CD4-positive, alpha-beta memory T cell (primary cell): ENCODE measurements at regions of chr17 and their contacts with region 1.

Region 1: GRCh38 chr17:47895856-47896671 is at the start of gene SP2:
- DNase-seq: peak; percentile 100
- H3K4me3 ChIP-seq: peak within 1 kb of the TSS; percentile 92 to 96
- H3K4me3 Mint-ChIP-seq: peak within 1 kb of the TSS; percentile 94 to 100 (median 99)
- H3K27ac ChIP-seq: peak within 1 kb of the TSS; percentile 97
- H3K27ac Mint-ChIP-seq: peak within 1 kb of the TSS; percentile 96 to 100 (median 100)
- H3K4me1 ChIP-seq: peaks cover 42% of the 10 kb centered on the region
- H3K4me1 Mint-ChIP-seq: peaks cover 27 to 58% (median 39%) of the 10 kb centered on the region in 4 donors
- H3K27me3 ChIP-seq: no peaks in the 10 kb centered on the region
- H3K27me3 Mint-ChIP-seq: no peaks in the 10 kb centered on the region
- total RNA-seq, gene SP2: 39.6 to 39.9 TPM

Region 2: DNA sequence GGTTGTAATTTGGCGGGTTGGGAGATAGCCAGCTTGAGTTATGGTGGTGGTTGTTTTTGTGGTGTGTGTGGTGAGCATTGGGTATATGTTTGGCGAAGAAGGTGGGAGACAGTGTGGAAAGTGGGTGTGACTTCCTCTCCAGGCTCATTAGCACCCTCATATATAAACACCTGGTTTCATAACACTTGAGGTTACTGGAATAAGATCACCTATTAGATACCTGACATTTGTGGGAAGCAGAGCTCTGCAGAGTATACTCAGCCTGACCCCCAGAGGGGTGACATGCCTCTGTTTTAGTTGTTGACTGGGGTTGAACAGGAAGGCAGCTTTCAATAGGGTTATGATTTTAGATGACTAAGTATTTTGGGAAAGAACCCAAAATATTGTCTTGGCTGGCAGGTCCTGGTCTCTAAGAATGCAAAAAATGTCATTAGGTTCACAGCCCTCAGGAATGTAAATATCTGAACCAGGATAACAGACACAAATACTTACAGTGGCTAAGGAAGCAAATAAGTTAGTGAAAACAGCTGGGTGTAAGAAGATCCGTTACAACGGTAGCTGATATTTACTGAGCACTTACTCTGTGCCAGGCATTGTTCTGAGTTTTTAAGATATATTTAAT is 590.7 kb before region 1 on chr17:
- CTCF ChIA-PET with region 1: no interaction called
- POLR2A ChIA-PET with region 1: no interaction called
- intact Hi-C with region 1: no loop called
- DNase-seq: no peak
- H3K4me3 ChIP-seq: no peak overlapping the region
- H3K4me3 Mint-ChIP-seq: peak overlapping the region in 1 of 8 donors; percentile 13
- H3K27ac ChIP-seq: no peak overlapping the region
- H3K27ac Mint-ChIP-seq: peak overlapping the region in 4 of 7 donors; percentile 3 to 48 (median 22)
- H3K4me1 ChIP-seq: peaks cover 14% of the 10 kb centered on the region
- H3K4me1 Mint-ChIP-seq: peaks cover 8 to 14% (median 10%) of the 10 kb centered on the region in 4 donors
- H3K27me3 ChIP-seq: no peaks in the 10 kb centered on the region
- H3K27me3 Mint-ChIP-seq: peaks cover 0 to 2% of the 10 kb centered on the region in 2 donors

Region 3: GRCh38 chr17:47643116-47643515 is 252.9 kb before region 1 on chr17:
- CTCF ChIA-PET with region 1: no interaction called
- POLR2A ChIA-PET with region 1: no interaction called
- intact Hi-C with region 1: no loop called
- DNase-seq: no peak
- H3K4me3 ChIP-seq: no peak overlapping the region
- H3K4me3 Mint-ChIP-seq: no peak overlapping the region
- H3K27ac ChIP-seq: no peak overlapping the region
- H3K27ac Mint-ChIP-seq: no peak overlapping the region
- H3K4me1 ChIP-seq: peaks cover 8% of the 10 kb centered on the region
- H3K4me1 Mint-ChIP-seq: peaks cover under 1 to 13% (median 6%) of the 10 kb centered on the region in 4 donors
- H3K27me3 ChIP-seq: no peaks in the 10 kb centered on the region
- H3K27me3 Mint-ChIP-seq: no peaks in the 10 kb centered on the region

Region 4: GRCh38 chr17:47804516-47804915 is 91.5 kb before region 1 on chr17:
- CTCF ChIA-PET with region 1: no interaction called
- POLR2A ChIA-PET with region 1: no interaction called
- intact Hi-C with region 1: no loop called
- DNase-seq: no peak
- H3K4me3 ChIP-seq: no peak overlapping the region
- H3K4me3 Mint-ChIP-seq: no peak overlapping the region
- H3K27ac ChIP-seq: no peak overlapping the region
- H3K27ac Mint-ChIP-seq: peak overlapping the region in 1 of 7 donors; percentile 70
- H3K4me1 ChIP-seq: no peaks in the 10 kb centered on the region
- H3K4me1 Mint-ChIP-seq: no peaks in the 10 kb centered on the region
- H3K27me3 ChIP-seq: no peaks in the 10 kb centered on the region
- H3K27me3 Mint-ChIP-seq: no peaks in the 10 kb centered on the region

Region 5: GRCh38 chr17:47821424-47822391 is 74.4 kb before region 1 on chr17 and contains the start of gene OSBPL7:
- CTCF ChIA-PET with region 1: interaction called, 3 read pairs
- POLR2A ChIA-PET with region 1: interaction called, 26 read pairs
- intact Hi-C with region 1: no loop called
- DNase-seq: peak; percentile 72 to 88 (median 76)
- H3K4me3 ChIP-seq: peak within 1 kb of the TSS; percentile 90 to 93
- H3K4me3 Mint-ChIP-seq: peak within 1 kb of the TSS; percentile 94 to 99 (median 97)
- H3K27ac ChIP-seq: peak within 1 kb of the TSS; percentile 69
- H3K27ac Mint-ChIP-seq: peak within 1 kb of the TSS; percentile 86 to 98 (median 96)
- H3K4me1 ChIP-seq: peaks cover 25% of the 10 kb centered on the region
- H3K4me1 Mint-ChIP-seq: peaks cover 12 to 26% (median 21%) of the 10 kb centered on the region in 4 donors
- H3K27me3 ChIP-seq: no peaks in the 10 kb centered on the region
- H3K27me3 Mint-ChIP-seq: no peaks in the 10 kb centered on the region
- total RNA-seq, gene OSBPL7: 46.5 to 50.4 TPM

Region 6: DNA sequence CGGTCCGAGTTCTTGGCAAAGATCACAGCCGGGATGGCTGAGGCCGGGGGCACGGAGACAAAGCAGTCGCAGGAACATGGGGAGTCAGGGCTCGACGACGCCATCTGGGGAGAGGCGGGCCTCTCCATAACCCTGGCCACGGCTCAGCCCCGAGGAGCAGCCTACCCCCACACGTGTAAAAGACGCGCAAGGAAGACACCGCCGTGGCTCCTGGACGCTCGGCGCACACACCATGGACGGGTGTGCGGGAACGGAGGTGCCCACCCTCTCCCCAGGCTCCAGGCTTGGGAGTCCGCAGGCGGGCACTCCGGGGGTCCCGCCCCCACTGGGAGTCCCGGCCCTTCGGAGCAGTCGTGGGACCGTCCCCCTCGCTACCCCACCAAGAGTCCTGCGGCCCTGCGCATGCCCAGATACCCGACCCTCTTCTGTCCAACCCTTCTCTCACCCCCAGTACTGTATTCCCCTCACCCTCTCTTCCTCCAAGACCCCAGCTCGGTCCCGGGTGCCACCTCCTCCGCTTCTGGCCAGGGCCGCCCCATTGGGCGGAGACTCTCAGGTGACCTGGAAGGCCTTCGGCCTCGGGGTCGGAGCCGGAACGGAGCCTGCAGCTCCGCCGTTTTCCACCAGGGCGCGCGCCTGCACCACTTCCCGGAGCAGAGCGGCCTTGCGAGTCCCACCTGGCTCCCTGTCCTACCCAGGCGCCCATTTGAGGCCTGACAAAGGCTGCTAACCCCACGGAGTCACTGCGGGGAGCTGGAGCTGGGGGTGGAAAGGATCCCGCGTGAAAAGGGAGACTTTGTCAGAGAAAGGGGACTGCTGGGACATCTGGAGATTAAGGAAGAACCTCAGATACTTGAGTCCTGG is 55.1 kb before region 1 on chr17 and contains the start of gene SCRN2:
- CTCF ChIA-PET with region 1: interaction called, 562 read pairs
- POLR2A ChIA-PET with region 1: interaction called, 271 read pairs
- intact Hi-C with region 1: no loop called
- DNase-seq: peak; percentile 78 to 88 (median 79)
- H3K4me3 ChIP-seq: peak within 1 kb of the TSS; percentile 88
- H3K4me3 Mint-ChIP-seq: peak within 1 kb of the TSS; percentile 89 to 97 (median 93)
- H3K27ac ChIP-seq: peak within 1 kb of the TSS; percentile 65
- H3K27ac Mint-ChIP-seq: peak within 1 kb of the TSS; percentile 53 to 95 (median 84)
- H3K4me1 ChIP-seq: peaks cover 33% of the 10 kb centered on the region
- H3K4me1 Mint-ChIP-seq: peaks cover 8 to 41% (median 29%) of the 10 kb centered on the region in 4 donors
- H3K27me3 ChIP-seq: peaks cover 18% of the 10 kb centered on the region
- H3K27me3 Mint-ChIP-seq: peaks cover 7 to 17% of the 10 kb centered on the region in 2 donors
- total RNA-seq, gene SCRN2: 26.4 to 30.5 TPM

Region 7: DNA sequence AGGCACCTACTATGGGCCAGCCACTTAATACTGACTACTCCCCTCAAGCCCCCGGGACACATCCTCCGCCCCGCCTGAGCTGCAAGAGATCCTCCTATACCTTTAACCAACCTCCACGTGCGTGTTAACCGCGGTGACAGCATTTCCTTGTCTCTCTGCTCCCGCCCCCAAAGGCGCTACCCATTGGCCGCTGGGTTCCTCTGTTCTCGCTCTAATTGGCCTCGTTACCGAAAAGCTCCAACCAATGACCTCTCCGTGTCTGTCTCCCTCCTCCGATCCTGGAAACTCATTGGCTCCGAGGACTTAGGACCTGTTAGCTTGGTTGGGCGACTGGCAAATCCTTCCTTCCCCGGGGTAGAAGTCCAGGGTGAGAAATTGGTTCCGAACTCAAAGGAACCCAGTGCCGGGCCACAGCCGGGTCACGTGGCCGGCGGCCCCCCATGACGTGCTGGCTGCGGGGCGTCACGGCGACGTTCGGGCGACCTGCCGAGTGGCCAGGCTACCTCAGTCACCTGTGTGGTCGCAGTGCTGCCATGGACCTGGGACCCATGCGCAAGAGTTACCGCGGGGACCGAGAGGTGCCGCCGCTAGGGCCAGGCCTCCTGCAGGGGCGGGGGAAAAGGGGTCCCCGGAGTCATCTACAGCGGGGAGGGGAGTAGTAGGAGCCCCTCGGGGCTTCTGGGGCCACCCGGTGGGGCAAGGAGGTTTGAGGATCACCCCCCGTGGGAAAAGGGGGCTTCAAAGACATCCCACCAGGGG is 45.4 kb after region 1 on chr17 and contains the start of gene PNPO:
- CTCF ChIA-PET with region 1: interaction called, 23 read pairs
- POLR2A ChIA-PET with region 1: interaction called, 30 read pairs
- intact Hi-C with region 1: loop called (anchors 1 kb)
- DNase-seq: peak; percentile 93 to 98 (median 94)
- H3K4me3 ChIP-seq: peak within 1 kb of the TSS; percentile 82 to 85
- H3K4me3 Mint-ChIP-seq: peak within 1 kb of the TSS; percentile 77 to 95 (median 88)
- H3K27ac ChIP-seq: peak within 1 kb of the TSS; percentile 76
- H3K27ac Mint-ChIP-seq: peak within 1 kb of the TSS; percentile 62 to 96 (median 92)
- H3K4me1 ChIP-seq: peaks cover 29% of the 10 kb centered on the region
- H3K4me1 Mint-ChIP-seq: peaks cover 20 to 46% (median 32%) of the 10 kb centered on the region in 4 donors
- H3K27me3 ChIP-seq: no peaks in the 10 kb centered on the region
- H3K27me3 Mint-ChIP-seq: no peaks in the 10 kb centered on the region
- total RNA-seq, gene PNPO: 12.1 TPM

Region 8: GRCh38 chr17:48047741-48048383 is 151.8 kb after region 1 on chr17 and contains the start of gene NFE2L1:
- CTCF ChIA-PET with region 1: no interaction called
- POLR2A ChIA-PET with region 1: interaction called, 4 read pairs
- intact Hi-C with region 1: loop called (anchors 1 kb)
- DNase-seq: peak; percentile 98 to 100 (median 98)
- H3K4me3 ChIP-seq: peak within 1 kb of the TSS; percentile 86 to 88
- H3K4me3 Mint-ChIP-seq: peak within 1 kb of the TSS; percentile 94 to 99 (median 96)
- H3K27ac ChIP-seq: peak within 1 kb of the TSS; percentile 76
- H3K27ac Mint-ChIP-seq: peak within 1 kb of the TSS; percentile 94 to 99 (median 99)
- H3K4me1 ChIP-seq: peaks cover 54% of the 10 kb centered on the region
- H3K4me1 Mint-ChIP-seq: peaks cover 29 to 69% (median 49%) of the 10 kb centered on the region in 4 donors
- H3K27me3 ChIP-seq: no peaks in the 10 kb centered on the region
- H3K27me3 Mint-ChIP-seq: no peaks in the 10 kb centered on the region
- total RNA-seq, gene NFE2L1: 53.5 to 62.5 TPM

Region 9: GRCh38 chr17:48074315-48075081 is 178.4 kb after region 1 on chr17:
- CTCF ChIA-PET with region 1: no interaction called
- POLR2A ChIA-PET with region 1: no interaction called
- intact Hi-C with region 1: no loop called
- DNase-seq: peak; percentile 64 to 85 (median 69)
- H3K4me3 ChIP-seq: no peak overlapping the region
- H3K4me3 Mint-ChIP-seq: no peak overlapping the region
- H3K27ac ChIP-seq: no peak overlapping the region
- H3K27ac Mint-ChIP-seq: peak overlapping the region in 2 of 7 donors; percentile 48 to 57
- H3K4me1 ChIP-seq: no peaks in the 10 kb centered on the region
- H3K4me1 Mint-ChIP-seq: peaks cover 0 to 6% (median 2%) of the 10 kb centered on the region in 4 donors
- H3K27me3 ChIP-seq: no peaks in the 10 kb centered on the region
- H3K27me3 Mint-ChIP-seq: no peaks in the 10 kb centered on the region